A673 (cell line): ENCODE measurements at regions of chr3 and their contacts with region 1.

Region 1: GRCh38 chr3:30890907-30891306 is 3.6 kb downstream of the GADL1 start:
- DNase-seq: peak; percentile 97
- H3K4me3 ChIP-seq: peak overlapping the region; percentile 4
- H3K27ac ChIP-seq: peak overlapping the region; percentile 92
- H3K4me1 ChIP-seq: peaks cover 54% of the 10 kb centered on the region
- H3K27me3 ChIP-seq: no peaks in the 10 kb centered on the region
- CTCF ChIP-seq: no peak

Region 2: GRCh38 chr3:30858894-30859389 is 32.0 kb before region 1 on chr3:
- CTCF ChIA-PET with region 1: no interaction called
- POLR2A ChIA-PET with region 1: no interaction called
- intact Hi-C with region 1: loop called (anchors 2 kb)
- DNase-seq: no peak
- H3K4me3 ChIP-seq: no peak overlapping the region
- H3K27ac ChIP-seq: no peak overlapping the region
- H3K4me1 ChIP-seq: peaks cover 68% of the 10 kb centered on the region
- H3K27me3 ChIP-seq: no peaks in the 10 kb centered on the region
- CTCF ChIP-seq: no peak